ENCODE measurements at regions of chr1 and their contacts with region 1.

Region 1: DNA sequence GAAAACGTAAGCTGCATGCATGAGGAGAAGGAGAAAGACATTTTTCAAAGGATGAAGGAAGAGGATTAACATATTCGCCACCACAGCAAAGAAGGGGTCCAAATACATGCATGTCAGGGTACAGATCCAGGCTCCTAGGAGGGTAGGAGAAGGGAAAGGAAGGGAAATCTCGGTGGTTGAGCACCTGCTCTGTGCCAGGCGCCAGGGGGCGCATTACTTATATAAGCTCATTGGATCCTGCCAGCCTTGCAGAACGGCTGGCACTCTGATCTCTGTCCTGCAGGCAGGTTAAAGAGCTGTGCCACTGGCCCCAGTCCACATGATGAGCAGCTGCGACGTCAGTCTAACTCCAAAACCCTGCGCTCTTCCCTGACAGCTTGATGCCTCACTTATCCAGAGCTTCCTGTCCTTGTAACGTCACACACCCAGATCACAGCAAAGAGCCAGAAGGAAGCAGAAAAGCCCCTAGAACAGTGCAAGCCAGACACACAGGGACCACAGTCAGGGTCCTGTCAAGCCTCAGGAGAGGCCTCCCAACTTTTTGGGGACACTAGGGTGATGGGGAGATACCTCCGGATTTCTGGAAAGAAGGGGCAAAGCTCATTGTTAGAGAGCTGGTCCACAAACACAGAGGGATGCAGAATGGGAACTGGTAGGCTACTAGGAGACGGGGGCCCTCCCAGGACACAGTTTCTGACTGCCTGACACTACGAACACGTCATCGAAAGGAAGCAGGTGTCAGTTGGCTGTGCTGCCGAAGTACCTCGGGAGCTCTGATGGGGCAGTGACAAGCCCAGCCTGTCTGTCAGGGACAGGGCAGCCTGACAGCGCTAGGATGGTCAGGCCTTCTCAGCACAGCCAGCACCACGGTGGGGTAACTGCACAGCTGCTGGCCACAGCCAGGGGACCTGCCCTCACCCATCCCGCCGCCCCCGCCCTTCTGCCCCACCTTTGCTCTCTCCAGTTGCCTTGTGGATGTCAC is 99.1 kb downstream of the BEND5 start:
- DNase-seq: peak; percentile 59
- H3K4me3 Mint-ChIP-seq: no peak overlapping the region
- H3K27ac Mint-ChIP-seq: no peak overlapping the region
- H3K4me1 Mint-ChIP-seq: no peaks in the 10 kb centered on the region
- H3K27me3 Mint-ChIP-seq: peaks cover 3% of the 10 kb centered on the region

Region 2: DNA sequence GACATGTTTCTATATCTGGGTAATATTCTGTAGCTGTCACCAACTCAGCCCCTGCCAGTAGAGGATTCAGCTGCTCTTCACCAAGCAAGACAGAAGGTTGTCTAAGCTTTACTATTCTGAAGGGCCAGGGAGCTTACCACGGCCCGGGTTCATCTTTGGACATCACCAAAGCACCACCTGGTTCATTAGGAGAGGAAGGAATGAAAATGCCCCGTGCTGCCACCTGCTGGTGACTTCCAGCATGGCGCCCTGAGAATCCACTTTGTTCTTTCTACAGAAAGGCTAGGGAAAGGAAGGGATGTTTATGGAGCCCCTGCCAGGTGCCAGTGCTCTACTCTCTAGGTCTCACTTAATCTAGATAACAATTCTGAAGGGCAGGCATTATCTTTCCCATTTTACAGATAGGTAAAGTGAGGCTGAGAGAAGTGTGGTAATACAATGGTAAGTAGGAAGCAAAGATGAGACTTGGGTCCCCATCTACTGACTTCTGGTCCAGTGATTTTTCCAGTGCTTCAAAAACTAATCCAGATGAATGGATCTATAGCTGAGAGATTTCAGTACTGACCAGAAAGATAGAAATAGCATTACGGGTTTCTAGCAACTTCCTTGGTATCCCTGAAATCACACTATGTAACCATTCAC is 19.6 kb after region 1 on chr1:
- CTCF ChIA-PET with region 1: interaction called, 13 read pairs
- intact Hi-C with region 1: no loop called
- DNase-seq: peak; percentile 75
- H3K4me3 Mint-ChIP-seq: no peak overlapping the region
- H3K27ac Mint-ChIP-seq: no peak overlapping the region
- H3K4me1 Mint-ChIP-seq: no peaks in the 10 kb centered on the region
- H3K27me3 Mint-ChIP-seq: peaks cover 14% of the 10 kb centered on the region

Region 3: GRCh38 chr1:48741395-48741794 is 63.8 kb after region 1 on chr1:
- CTCF ChIA-PET with region 1: no interaction called
- intact Hi-C with region 1: no loop called
- DNase-seq: no peak
- H3K4me3 Mint-ChIP-seq: no peak overlapping the region
- H3K27ac Mint-ChIP-seq: no peak overlapping the region
- H3K4me1 Mint-ChIP-seq: no peaks in the 10 kb centered on the region
- H3K27me3 Mint-ChIP-seq: no peaks in the 10 kb centered on the region

Region 4: GRCh38 chr1:48817505-48818114 is 140.0 kb after region 1 on chr1:
- CTCF ChIA-PET with region 1: interaction called, 29 read pairs
- intact Hi-C with region 1: loop called (anchors 1 kb)
- DNase-seq: peak; percentile 56
- H3K4me3 Mint-ChIP-seq: no peak overlapping the region
- H3K27ac Mint-ChIP-seq: no peak overlapping the region
- H3K4me1 Mint-ChIP-seq: no peaks in the 10 kb centered on the region
- H3K27me3 Mint-ChIP-seq: peaks cover 5% of the 10 kb centered on the region

Region 5: GRCh38 chr1:48870596-48870995 is 193.0 kb after region 1 on chr1:
- CTCF ChIA-PET with region 1: interaction called, 5 read pairs
- intact Hi-C with region 1: loop called (anchors 2 kb)
- DNase-seq: peak; percentile 18
- H3K4me3 Mint-ChIP-seq: no peak overlapping the region
- H3K27ac Mint-ChIP-seq: no peak overlapping the region
- H3K4me1 Mint-ChIP-seq: no peaks in the 10 kb centered on the region
- H3K27me3 Mint-ChIP-seq: peaks cover 6% of the 10 kb centered on the region

Region 6: DNA sequence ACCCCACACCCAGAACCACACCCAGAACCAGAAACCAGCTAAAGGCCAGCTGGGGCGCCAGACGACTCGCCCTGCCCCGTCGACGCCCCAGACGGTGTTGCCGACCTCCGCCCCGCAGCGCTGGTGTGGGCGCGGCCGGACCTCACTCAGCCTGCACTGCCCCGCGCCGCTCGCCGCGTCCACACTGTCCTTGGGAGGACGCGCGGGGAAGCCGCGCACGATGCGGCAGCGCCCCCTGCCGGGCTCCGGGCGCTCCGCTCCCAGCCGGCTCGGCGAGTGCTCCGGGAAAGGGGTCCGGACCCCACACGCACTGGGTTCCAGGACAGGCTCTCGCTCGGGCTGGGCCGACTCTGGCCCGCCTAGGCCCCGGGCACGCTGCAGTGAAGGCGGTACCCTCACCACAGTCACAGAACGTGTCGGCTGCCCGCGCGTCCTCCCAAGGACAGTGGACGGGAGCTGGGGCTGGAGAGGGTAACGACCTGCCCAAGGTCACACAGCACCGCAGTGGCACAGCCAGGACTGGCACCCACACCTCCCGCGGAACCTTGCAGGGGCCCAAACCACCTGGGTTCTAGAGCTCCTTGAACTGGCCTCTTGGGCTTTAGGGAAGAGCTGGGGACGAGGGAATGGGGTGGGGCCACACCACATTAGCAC is 1655.5 kb after region 1 on chr1:
- CTCF ChIA-PET with region 1: interaction called, 3 read pairs
- intact Hi-C with region 1: loop called (anchors 5 kb)
- DNase-seq: peak; percentile 49
- H3K4me3 Mint-ChIP-seq: peak overlapping the region; percentile 24
- H3K27ac Mint-ChIP-seq: no peak overlapping the region
- H3K4me1 Mint-ChIP-seq: no peaks in the 10 kb centered on the region
- H3K27me3 Mint-ChIP-seq: peaks cover 50% of the 10 kb centered on the region

Region 7: GRCh38 chr1:50348449-50349241 is 1671.0 kb after region 1 on chr1:
- CTCF ChIA-PET with region 1: no interaction called
- intact Hi-C with region 1: loop called (anchors 1 kb)
- DNase-seq: peak; percentile 63
- H3K4me3 Mint-ChIP-seq: no peak overlapping the region
- H3K27ac Mint-ChIP-seq: no peak overlapping the region
- H3K4me1 Mint-ChIP-seq: no peaks in the 10 kb centered on the region
- H3K27me3 Mint-ChIP-seq: peaks cover 20% of the 10 kb centered on the region